GM23248 (cell line): ENCODE measurements at regions of chrX and their contacts with region 1.

Region 1: DNA sequence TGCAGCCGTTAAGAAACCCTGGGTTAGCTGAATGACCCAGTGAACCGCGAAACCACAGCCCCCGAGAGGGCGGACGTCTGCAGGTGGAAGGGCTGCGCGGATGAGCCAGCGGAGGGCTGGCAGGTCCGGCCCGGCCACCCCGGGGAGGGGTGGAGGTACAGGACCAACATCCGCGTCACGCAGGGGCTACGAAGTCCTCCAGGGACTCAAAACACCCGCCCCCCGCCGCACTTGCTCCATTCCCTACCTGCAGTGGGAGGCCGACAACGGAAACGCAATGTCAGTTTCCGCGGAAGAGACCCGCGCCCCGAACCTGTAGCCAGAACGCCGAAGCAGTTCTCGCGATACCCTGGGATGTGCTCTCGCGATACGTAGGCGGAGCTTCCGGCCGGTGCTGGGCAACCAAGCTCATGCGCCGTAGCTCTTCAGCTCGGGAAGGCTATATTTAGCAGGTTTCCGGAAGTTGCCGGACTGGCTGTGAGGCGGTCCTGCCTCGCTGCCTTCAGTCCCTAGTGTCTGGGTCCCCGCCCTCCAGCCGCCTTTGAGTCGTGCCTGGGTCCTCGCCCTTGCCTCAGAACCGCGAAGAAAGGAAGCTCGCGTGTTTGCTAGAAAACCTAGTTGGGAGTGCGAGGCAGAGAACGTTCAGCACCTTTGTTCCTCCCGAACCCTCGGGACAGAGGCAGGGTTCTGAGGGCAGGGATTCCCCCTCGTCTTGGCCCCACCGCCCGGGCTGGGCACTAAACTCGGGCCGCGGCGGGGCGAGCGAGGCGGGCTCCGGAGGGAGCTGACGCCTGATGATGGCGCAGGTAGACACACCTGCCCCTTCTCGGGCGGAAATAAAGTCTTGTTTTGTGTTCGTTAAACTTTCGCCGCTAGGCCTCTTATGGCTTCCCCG is at the starts of genes OFD1 and TRAPPC2:
- DNase-seq: peak; percentile 95
- H3K4me3 ChIP-seq: peak within 1 kb of the TSS; percentile 96
- H3K27ac ChIP-seq: peak within 1 kb of the TSS; percentile 82
- H3K4me1 ChIP-seq: peaks cover 25% of the 10 kb centered on the region
- H3K27me3 ChIP-seq: no peaks in the 10 kb centered on the region
- total RNA-seq, gene OFD1: 3.2 and 6.2 TPM in 2 replicates
- total RNA-seq, gene TRAPPC2: 10.4 and 12.3 TPM in 2 replicates

Region 2: DNA sequence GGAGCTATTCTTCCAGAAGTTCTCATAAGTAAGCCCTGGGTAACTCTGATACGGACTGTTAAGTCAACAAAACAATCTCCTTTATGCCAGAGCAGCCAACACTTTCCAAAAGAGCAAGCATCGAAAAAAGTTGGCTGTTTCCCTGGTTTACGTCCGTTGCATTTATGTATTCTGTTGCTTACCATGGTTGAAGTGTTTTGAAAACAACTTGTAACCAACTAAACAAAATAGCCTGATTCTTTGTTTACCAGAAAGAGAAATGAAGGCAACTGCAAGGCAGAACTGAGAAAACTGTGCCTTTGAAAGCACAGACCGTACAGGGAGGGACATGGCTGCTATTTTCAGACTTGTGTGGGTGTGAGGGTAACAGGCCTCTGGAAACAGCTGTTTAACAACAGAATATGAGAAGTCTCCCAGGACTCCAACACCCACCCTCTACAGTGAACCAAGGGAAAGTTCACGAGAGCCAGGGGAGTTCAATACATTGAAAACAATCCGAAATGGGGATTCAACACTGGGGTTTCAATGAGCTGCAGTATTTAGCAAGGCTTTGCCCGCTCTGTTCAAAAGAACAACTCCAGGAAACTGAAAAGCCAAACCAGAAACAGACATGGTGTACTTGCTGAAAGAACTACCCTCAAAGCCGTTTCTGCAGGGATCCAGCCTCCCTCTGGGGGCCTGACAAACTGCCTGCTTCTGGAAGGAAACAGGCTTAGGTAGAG is 260.9 kb before region 1 on chrX:
- in situ Hi-C with region 1: no loop called
- DNase-seq: peak; percentile 49
- H3K4me3 ChIP-seq: peak overlapping the region; percentile 54
- H3K27ac ChIP-seq: peak overlapping the region; percentile 70
- H3K4me1 ChIP-seq: peaks cover 19% of the 10 kb centered on the region
- H3K27me3 ChIP-seq: no peaks in the 10 kb centered on the region

Region 3: GRCh38 chrX:13506574-13506973 is 228.0 kb before region 1 on chrX:
- in situ Hi-C with region 1: loop called (anchors 25 kb)
- DNase-seq: peak; percentile 60
- H3K4me3 ChIP-seq: no peak overlapping the region
- H3K27ac ChIP-seq: no peak overlapping the region
- H3K4me1 ChIP-seq: no peaks in the 10 kb centered on the region
- H3K27me3 ChIP-seq: no peaks in the 10 kb centered on the region

Region 4: GRCh38 chrX:13581554-13581953 is 153.0 kb before region 1 on chrX:
- in situ Hi-C with region 1: no loop called
- DNase-seq: peak; percentile 35
- H3K4me3 ChIP-seq: no peak overlapping the region
- H3K27ac ChIP-seq: no peak overlapping the region
- H3K4me1 ChIP-seq: 0 out of 2 replicates have a peak, but pooled peaks cover 4% of the 10 kb centered on the region
- H3K27me3 ChIP-seq: no peaks in the 10 kb centered on the region

Region 5: GRCh38 chrX:13669246-13669737 is 65.2 kb before region 1 on chrX:
- in situ Hi-C with region 1: loop called (anchors 10 kb)
- DNase-seq: peak; percentile 89
- H3K4me3 ChIP-seq: peak overlapping the region; percentile 40
- H3K27ac ChIP-seq: peak overlapping the region; percentile 89
- H3K4me1 ChIP-seq: peaks cover 19% of the 10 kb centered on the region
- H3K27me3 ChIP-seq: no peaks in the 10 kb centered on the region